MCF 10A (cell line): ENCODE measurements at regions of chr3 and their contacts with region 1.

Region 1: GRCh38 chr3:150870396-150870795 is 34.8 kb downstream of the MINDY4B start:
- DNase-seq: no peak
- H3K4me3 Mint-ChIP-seq: no peak overlapping the region
- H3K27ac Mint-ChIP-seq: no peak overlapping the region
- H3K4me1 Mint-ChIP-seq: peaks cover 2% of the 10 kb centered on the region
- H3K27me3 Mint-ChIP-seq: no peaks in the 10 kb centered on the region
- CTCF ChIP-seq: no peak

Region 2: GRCh38 chr3:150528354-150528797 is 342.0 kb before region 1 on chr3:
- CTCF ChIA-PET with region 1: no interaction called
- POLR2A ChIA-PET with region 1: no interaction called
- intact Hi-C with region 1: loop called (anchors 1 kb)
- DNase-seq: peak; percentile 31
- H3K4me3 Mint-ChIP-seq: no peak overlapping the region
- H3K27ac Mint-ChIP-seq: no peak overlapping the region
- H3K4me1 Mint-ChIP-seq: no peaks in the 10 kb centered on the region
- H3K27me3 Mint-ChIP-seq: no peaks in the 10 kb centered on the region
- CTCF ChIP-seq: peak; percentile 41

Region 3: GRCh38 chr3:150727653-150728502 is 142.5 kb before region 1 on chr3:
- CTCF ChIA-PET with region 1: interaction called, 55 read pairs
- POLR2A ChIA-PET with region 1: no interaction called
- intact Hi-C with region 1: loop called (anchors 1 kb)
- DNase-seq: peak; percentile 51
- H3K4me3 Mint-ChIP-seq: no peak overlapping the region
- H3K27ac Mint-ChIP-seq: no peak overlapping the region
- H3K4me1 Mint-ChIP-seq: peaks cover 14% of the 10 kb centered on the region
- H3K27me3 Mint-ChIP-seq: no peaks in the 10 kb centered on the region
- CTCF ChIP-seq: no peak

Region 4: DNA sequence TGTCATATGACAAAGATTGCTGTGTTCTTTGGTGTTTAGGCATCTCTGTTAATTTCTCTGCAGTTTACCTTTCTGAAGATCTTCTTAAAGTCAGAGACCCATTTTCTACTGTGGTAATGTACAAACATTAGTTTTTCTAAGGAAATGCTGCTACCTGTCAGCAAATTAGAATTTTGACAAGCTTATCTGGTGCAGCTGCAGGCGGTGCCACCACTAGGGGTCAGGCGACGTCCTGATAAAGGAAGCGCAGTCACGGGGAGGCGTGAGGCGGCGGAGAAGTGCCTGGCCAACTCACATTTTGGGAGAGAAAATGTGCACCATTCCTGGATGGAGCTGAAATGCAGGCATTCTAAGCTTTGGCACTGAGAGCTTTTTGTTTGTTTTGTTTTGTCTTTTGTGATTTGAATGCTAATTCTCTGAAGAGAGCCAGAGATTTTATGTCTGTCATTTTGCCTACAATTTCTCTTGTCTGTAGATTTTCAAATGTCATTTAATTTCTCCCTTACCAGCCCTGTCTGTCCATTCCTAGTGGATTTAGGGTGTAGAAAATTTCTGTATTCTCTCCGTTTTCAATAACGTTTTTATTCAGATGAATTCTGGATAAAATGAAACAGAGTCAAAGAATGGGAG is 82.5 kb before region 1 on chr3:
- CTCF ChIA-PET with region 1: interaction called, 21 read pairs
- POLR2A ChIA-PET with region 1: interaction called, 3 read pairs
- intact Hi-C with region 1: loop called (anchors 1 kb)
- DNase-seq: peak; percentile 57
- H3K4me3 Mint-ChIP-seq: no peak overlapping the region
- H3K27ac Mint-ChIP-seq: no peak overlapping the region
- H3K4me1 Mint-ChIP-seq: peaks cover 8% of the 10 kb centered on the region
- H3K27me3 Mint-ChIP-seq: no peaks in the 10 kb centered on the region
- CTCF ChIP-seq: peak; percentile 52